AG04450 (cell line): ENCODE measurements at regions of chr20 and their contacts with region 1.

Region 1: GRCh38 chr20:35994994-35995453 is 26.6 kb downstream of the CNBD2 start:
- DNase-seq: peak; percentile 57
- H3K4me3 ChIP-seq: no peak overlapping the region
- H3K27ac ChIP-seq: no peak overlapping the region
- H3K27me3 ChIP-seq: no peaks in the 10 kb centered on the region
- CTCF ChIP-seq: peak; percentile 99

Region 2: GRCh38 chr20:35954200-35954906 is 40.7 kb before region 1 on chr20 and contains the start of gene SCAND1:
- CTCF ChIA-PET with region 1: interaction called, 41 read pairs
- POLR2A ChIA-PET with region 1: no interaction called
- DNase-seq: peak; percentile 94
- H3K4me3 ChIP-seq: peak within 1 kb of the TSS; percentile 91
- H3K27ac ChIP-seq: peak within 1 kb of the TSS; percentile 99
- H3K27me3 ChIP-seq: no peaks in the 10 kb centered on the region
- CTCF ChIP-seq: peak; percentile 96
- polyA plus RNA-seq, gene SCAND1: 7.4 and 11.1 TPM in 2 replicates

Region 3: DNA sequence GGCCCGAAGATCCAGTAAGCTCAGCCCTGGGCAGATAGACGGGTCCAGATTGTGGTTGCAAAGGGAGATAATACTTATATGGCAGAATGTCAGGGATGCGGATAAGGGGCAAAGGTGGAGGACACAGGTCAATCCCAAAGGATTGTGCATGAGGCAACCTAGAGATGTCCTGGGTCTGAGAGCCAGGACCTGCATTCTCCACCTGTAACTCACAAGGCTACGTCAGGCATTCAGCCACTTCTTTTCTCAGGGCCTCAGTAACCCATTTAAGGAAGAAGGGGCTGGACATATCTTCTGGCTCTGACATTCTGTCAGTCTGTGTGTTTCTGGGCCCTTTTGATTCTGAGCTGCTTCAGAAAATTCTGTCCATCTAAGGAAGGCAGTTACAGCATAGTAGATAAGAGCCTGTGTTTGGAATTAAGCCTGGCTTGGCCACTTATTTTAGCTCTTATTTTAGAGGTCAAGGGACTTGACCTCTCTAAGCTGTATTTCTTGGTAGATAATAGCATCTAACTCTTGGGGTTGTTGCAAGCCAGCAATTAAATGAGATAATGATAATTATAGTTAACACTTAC is 13.5 kb after region 1 on chr20:
- CTCF ChIA-PET with region 1: interaction called, 15 read pairs
- POLR2A ChIA-PET with region 1: no interaction called
- DNase-seq: no peak
- H3K4me3 ChIP-seq: no peak overlapping the region
- H3K27ac ChIP-seq: no peak overlapping the region
- H3K27me3 ChIP-seq: peaks cover 8% of the 10 kb centered on the region
- CTCF ChIP-seq: no peak

Region 4: GRCh38 chr20:36070451-36070850 is 75.4 kb after region 1 on chr20:
- CTCF ChIA-PET with region 1: interaction called, 10 read pairs
- POLR2A ChIA-PET with region 1: no interaction called
- DNase-seq: no peak
- H3K4me3 ChIP-seq: no peak overlapping the region
- H3K27ac ChIP-seq: no peak overlapping the region
- H3K27me3 ChIP-seq: peaks cover 31% of the 10 kb centered on the region
- CTCF ChIP-seq: no peak

Region 5: DNA sequence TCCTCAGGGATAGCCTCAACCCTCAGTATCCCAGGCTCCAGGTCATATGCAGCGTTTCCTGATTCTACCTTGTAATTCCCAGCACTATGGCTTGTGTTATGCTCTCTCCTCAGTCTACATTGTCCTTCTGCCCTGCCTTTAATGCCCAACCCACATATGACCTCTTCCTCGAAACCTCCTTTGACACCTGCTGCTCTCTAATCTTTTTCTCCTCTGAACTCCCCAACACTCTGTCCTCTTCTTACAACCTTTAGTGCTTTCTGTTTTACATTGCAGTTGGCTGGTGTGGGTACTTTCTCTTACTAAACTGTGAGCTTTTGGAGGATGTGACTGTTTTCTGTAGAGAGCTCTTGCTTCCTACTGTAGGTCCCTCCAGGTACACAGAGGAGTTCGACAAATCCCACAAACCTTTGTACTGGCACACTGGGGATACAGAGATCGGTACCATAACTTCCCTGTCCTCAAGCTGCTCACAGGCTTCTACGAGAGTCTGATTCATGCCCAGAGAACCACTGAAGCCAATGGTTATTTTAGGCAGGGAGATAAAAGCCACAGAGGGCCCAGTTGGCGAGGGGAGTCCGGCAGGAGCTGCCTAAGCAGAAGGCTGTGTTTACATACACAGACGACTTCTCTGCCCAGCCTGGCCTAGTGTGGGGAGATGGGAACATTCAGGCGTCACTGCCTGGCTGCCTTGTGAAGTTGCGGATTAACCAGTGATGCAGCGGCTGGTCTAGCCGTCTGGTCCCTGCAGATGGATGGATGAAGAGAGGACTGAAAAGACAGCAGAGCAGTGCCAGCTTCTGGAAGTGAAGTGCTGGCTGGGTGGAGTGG is 151.1 kb after region 1 on chr20:
- CTCF ChIA-PET with region 1: interaction called, 583 read pairs
- POLR2A ChIA-PET with region 1: interaction called, 10 read pairs
- DNase-seq: no peak
- H3K4me3 ChIP-seq: no peak overlapping the region
- H3K27ac ChIP-seq: peak overlapping the region; percentile 21
- H3K27me3 ChIP-seq: peaks cover 17% of the 10 kb centered on the region
- CTCF ChIP-seq: no peak

Region 6: DNA sequence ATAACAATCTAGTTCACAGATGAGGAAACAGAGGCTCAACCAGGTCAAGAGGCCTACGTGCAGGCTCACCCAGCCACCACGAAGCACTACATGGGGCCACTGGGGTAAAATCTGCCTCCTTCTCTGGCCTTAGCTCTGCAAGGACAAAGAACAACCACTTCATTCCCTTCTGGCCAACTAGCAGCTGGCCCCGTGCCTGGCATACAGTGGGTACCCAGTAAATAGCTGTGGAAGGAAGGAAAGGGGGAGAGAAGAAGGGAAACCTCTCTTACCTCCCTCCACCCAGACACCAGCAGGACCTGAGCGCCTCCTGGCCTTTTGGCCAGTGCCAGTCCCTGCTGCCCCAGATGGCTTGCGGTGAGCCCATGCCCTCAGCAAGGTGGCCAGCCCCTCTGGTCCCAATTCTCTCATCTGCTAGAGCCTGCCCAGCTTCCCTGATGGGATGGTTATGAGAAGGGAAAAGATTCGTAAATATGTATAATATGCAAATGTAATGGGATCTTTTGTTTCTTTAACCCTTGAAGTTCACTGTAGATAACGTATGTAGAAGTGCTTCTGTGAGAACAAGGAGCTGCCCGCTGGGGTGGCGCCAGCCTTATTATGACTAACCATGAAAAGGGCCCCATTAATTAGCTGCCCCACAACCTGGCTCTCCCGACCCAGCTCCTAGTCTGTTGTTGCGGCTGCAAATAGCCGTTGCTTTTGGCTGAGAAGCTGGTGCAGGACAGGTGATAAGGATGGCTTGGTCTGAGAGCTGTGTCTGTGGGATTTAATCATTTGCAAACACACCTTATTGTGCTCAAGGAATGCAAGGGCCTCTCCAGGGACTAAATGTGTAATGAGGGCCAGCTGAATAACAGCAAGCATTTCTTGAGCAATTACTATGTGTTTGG is 373.1 kb after region 1 on chr20:
- CTCF ChIA-PET with region 1: no interaction called
- POLR2A ChIA-PET with region 1: no interaction called
- DNase-seq: no peak
- H3K4me3 ChIP-seq: no peak overlapping the region
- H3K27ac ChIP-seq: no peak overlapping the region
- H3K27me3 ChIP-seq: peaks cover 19% of the 10 kb centered on the region
- CTCF ChIP-seq: no peak